HepG2 (cell line): ENCODE measurements at regions of chr2 and their contacts with region 1.

Region 1: DNA sequence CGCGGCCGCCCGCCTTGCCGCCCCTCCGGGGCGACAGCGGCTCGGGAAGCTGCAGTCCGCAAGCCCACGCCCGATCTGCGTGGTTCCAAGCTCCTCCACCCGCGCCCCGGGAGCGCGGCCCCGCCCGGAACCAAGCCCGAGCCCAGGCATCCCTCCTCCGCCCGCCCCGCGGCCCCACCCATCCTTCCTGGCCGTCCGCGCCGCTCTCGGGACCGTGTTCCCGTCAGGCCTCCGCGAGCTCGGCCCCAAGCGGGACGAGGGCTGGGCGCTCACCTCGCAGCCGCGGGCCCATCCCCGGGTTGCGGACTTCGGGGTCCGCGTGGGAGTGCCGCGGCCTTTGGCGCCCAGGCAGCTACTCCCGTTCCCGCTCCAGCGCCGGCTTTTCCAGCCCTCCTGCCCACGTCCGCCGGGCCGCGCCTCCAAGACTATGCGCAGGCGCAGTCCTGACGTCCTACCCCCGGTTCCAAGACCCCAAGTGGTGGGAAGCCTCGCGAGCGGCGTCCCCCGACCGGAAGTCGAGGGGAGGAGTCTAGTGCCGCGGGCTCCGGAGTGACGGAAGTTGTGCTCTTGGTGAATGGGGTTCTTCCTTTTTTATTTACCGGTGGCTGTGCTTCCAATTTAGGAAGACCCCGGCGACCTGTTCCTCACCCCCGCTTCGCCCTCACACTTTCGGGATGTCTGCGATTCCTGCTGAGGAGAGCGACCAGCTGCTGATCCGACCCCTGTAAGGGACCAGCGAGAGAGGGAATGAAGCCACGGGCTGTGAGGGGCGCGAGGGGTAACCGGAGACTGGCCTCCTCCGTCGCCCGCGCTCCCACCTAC is at the starts of genes CPSF3 and ITGB1BP1:
- DNase-seq: peak; percentile 98
- ATAC-seq: peak; percentile 87
- H3K4me3 ChIP-seq: peak within 1 kb of the TSS; percentile 80 to 97 (median 86)
- H3K27ac ChIP-seq: peak within 1 kb of the TSS; percentile 75
- H3K4me1 ChIP-seq: peaks cover 57% of the 10 kb centered on the region
- H3K27me3 ChIP-seq: no peaks in the 10 kb centered on the region; a peak in 1 of 5 replicates
- CTCF ChIP-seq: peak; percentile 45; the same call in 1 of the 2 replicates
- EP300 ChIP-seq: 0 out of 4 replicates have a peak, but pooled peaks of 1 of the 2 experiments have one; percentile 5
- POLR2A ChIP-seq: peak; percentile 54 to 75; a peak in 3 of 4 replicates
- RAD21 ChIP-seq: peak; percentile 73
- total RNA-seq, gene CPSF3: 93.0 and 128 TPM in 2 replicates
- total RNA-seq, gene ITGB1BP1: 108 and 125 TPM in 2 replicates

Region 2: DNA sequence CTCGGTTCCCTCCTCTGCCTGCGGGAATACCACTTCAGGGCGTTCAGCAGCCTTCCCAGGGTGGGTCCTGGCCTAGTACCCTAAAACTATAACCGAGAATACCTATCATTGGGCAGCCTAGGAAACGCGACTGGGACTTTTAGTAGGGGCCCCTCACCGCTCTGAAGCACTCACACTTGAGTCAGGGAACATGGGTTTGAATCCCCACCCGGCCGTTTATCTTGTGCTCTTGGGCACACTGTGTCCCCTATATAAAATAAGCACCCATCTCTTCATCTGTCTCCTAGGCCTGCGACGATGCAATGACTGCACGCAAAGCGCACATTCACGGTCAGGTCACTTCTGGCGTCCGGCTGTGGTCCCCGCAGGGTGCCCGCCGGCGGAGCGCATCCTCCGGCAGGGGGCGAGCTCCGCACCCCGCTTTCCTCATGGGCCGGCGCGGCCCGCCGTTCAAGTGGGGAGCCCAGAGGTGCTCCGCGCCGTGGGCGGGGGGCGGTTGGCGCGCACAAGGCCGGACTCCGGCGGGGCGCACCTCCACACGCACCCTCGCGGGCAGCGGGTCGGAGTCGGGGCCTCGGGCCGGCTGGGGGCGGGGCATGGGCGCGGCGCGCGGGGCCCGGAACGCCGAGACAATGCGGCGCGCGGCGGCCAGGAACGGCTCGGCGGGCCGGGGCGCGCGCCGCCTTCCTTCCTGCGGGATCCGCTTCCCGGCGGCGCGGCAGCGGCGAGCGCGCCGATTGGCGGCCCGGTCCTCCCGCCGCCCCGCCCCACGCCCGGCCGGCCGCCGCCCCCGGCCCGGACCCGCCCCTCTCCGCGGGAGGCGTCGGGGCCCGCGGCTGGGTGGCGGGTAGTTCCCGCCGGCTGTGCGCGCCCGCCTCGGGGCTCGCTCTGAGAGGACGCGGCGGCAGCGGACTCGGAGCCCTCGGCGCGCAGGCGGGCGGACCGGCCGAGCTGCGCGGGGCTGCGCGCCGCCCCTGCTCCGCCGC is 217.1 kb before region 1 on chr2 and contains the start of gene ASAP2:
- CTCF ChIA-PET with region 1: no interaction called
- POLR2A ChIA-PET with region 1: interaction called, 4 read pairs
- in situ Hi-C with region 1: no loop called
- intact Hi-C with region 1: loop called (anchors 2 kb)
- DNase-seq: peak; percentile 59
- ATAC-seq: peak; percentile 79
- H3K4me3 ChIP-seq: peak within 1 kb of the TSS; percentile 87 to 96 (median 90)
- H3K27ac ChIP-seq: peak within 1 kb of the TSS; percentile 1
- H3K4me1 ChIP-seq: peaks cover 62% of the 10 kb centered on the region
- H3K27me3 ChIP-seq: no peaks in the 10 kb centered on the region; a peak in 1 of 5 replicates
- CTCF ChIP-seq: peak; percentile 89
- EP300 ChIP-seq: no peak
- POLR2A ChIP-seq: peak in 1 of 2 experiments; percentile 31; a peak in 1 of 4 replicates
- RAD21 ChIP-seq: peak; percentile 96
- total RNA-seq, gene ASAP2: 7.3 and 7.5 TPM in 2 replicates

Region 3: GRCh38 chr2:9378433-9379390 is 44.6 kb before region 1 on chr2:
- CTCF ChIA-PET with region 1: no interaction called
- POLR2A ChIA-PET with region 1: interaction called, 16 read pairs
- in situ Hi-C with region 1: no loop called
- intact Hi-C with region 1: no loop called
- DNase-seq: no peak
- ATAC-seq: peak; percentile 29; the same call in 1 of the 3 replicates
- H3K4me3 ChIP-seq: no peak overlapping the region
- H3K27ac ChIP-seq: no peak overlapping the region
- H3K4me1 ChIP-seq: peaks cover 46% of the 10 kb centered on the region
- H3K27me3 ChIP-seq: no peaks in the 10 kb centered on the region
- CTCF ChIP-seq: no peak
- EP300 ChIP-seq: no peak
- POLR2A ChIP-seq: no peak
- RAD21 ChIP-seq: no peak

Region 4: DNA sequence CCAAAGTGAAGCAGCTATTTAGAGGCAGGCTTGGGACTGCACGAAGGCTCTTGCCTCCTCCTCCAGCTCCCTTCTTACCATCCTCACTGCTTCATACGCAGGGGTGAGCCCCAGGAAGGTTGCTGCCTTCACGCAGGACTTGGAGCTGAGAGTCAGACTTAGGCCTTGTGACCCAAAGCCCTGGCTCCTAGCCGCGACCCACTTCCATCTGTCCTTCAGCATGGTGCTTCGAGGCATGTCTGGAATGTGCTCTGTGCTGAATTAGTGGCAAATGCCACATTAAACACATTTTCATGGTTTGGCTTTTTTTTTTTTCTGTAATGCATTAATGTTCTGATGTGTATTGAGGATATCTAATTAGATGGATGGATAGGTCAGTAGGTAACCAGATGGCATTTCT is 37.5 kb before region 1 on chr2:
- CTCF ChIA-PET with region 1: no interaction called
- POLR2A ChIA-PET with region 1: interaction called, 44 read pairs
- in situ Hi-C with region 1: loop called (anchors 5 kb)
- intact Hi-C with region 1: loop called (anchors 1 kb)
- DNase-seq: no peak
- ATAC-seq: no peak
- H3K4me3 ChIP-seq: no peak overlapping the region
- H3K27ac ChIP-seq: peak overlapping the region; percentile 54
- H3K4me1 ChIP-seq: peaks cover 72% of the 10 kb centered on the region
- H3K27me3 ChIP-seq: no peaks in the 10 kb centered on the region
- CTCF ChIP-seq: no peak
- EP300 ChIP-seq: no peak
- POLR2A ChIP-seq: no peak
- RAD21 ChIP-seq: no peak